ENCODE measurements at regions of chr5 and their contacts with region 1.

Region 1: GRCh38 chr5:177370488-177371119 is 12.9 kb downstream of the RGS14 start:
- DNase-seq: peak; percentile 75
- H3K4me3 Mint-ChIP-seq: peak overlapping the region; percentile 74
- H3K27ac Mint-ChIP-seq: no peak overlapping the region
- H3K4me1 Mint-ChIP-seq: peaks cover 70% of the 10 kb centered on the region
- H3K27me3 Mint-ChIP-seq: no peaks in the 10 kb centered on the region

Region 2: GRCh38 chr5:177311723-177312648 is 58.6 kb before region 1 on chr5 and contains the start of gene MXD3:
- CTCF ChIA-PET with region 1: interaction called, 11 read pairs
- intact Hi-C with region 1: no loop called
- DNase-seq: peak; percentile 99
- H3K4me3 Mint-ChIP-seq: peak within 1 kb of the TSS; percentile 97
- H3K27ac Mint-ChIP-seq: peak within 1 kb of the TSS; percentile 82
- H3K4me1 Mint-ChIP-seq: peaks cover 20% of the 10 kb centered on the region
- H3K27me3 Mint-ChIP-seq: peaks cover 3% of the 10 kb centered on the region
- total RNA-seq, gene MXD3: 45.0 to 51.7 TPM

Region 3: DNA sequence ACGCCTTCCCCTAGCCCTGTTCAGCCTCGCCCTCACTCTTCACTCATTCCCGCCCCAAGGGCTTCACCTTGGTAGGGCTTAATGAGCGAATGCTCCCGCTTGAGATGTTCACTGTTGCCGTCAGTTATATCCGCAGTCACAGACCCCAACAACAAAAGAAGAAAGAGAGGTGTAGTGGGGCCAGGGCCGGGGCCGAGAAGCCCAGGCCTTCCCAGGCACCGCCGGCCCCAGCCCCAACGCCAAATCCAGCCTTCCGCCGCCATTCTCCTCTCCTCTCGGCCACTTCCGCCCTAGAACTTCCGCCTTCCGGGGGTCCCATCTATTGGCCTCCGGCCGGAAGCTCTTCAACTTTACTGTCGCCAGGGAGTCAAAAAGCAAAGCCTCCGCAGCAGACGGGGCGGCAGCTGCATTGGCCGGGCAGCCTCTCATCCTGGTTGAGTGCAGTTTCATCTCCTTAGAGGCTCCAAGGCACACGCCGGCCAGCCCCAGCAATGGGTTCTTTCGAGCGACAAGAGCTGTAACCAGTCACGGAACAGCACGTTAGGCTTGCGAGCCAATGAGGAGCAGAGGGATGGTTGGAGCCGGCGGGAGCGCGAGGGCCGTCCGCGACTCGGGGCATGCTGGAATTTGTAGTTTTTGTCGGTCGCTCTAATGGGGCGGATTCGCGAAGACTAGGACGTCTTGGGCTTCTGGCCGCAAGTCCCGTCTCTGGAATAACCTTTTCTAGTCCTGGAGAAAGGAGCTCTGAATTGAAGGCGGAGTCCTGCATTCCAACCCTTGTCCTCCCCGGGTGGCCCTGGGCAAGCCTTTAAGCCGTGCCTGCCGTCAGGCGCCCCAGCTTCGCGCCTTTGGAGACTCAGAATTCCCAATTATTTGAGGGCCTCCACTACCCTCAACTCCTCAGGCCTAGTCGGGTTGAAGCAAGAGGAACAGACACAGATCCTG is 18.9 kb before region 1 on chr5 and contains the start of gene LMAN2:
- CTCF ChIA-PET with region 1: interaction called, 50 read pairs
- intact Hi-C with region 1: loop called (anchors 1 kb)
- DNase-seq: peak; percentile 96
- H3K4me3 Mint-ChIP-seq: peak within 1 kb of the TSS; percentile 95
- H3K27ac Mint-ChIP-seq: peak within 1 kb of the TSS; percentile 100
- H3K4me1 Mint-ChIP-seq: peaks cover 43% of the 10 kb centered on the region
- H3K27me3 Mint-ChIP-seq: no peaks in the 10 kb centered on the region
- total RNA-seq, gene LMAN2: 82.2 to 83.9 TPM

Region 4: GRCh38 chr5:177357459-177358351 is 12.9 kb before region 1 on chr5 and contains the start of gene RGS14:
- CTCF ChIA-PET with region 1: interaction called, 50 read pairs
- intact Hi-C with region 1: no loop called
- DNase-seq: peak; percentile 73
- H3K4me3 Mint-ChIP-seq: peak within 1 kb of the TSS; percentile 88
- H3K27ac Mint-ChIP-seq: peak within 1 kb of the TSS; percentile 87
- H3K4me1 Mint-ChIP-seq: peaks cover 62% of the 10 kb centered on the region
- H3K27me3 Mint-ChIP-seq: no peaks in the 10 kb centered on the region
- total RNA-seq, gene RGS14: 34.6 to 39.2 TPM

Region 5: GRCh38 chr5:177382423-177383029 is 11.9 kb after region 1 on chr5:
- CTCF ChIA-PET with region 1: interaction called, 31 read pairs
- intact Hi-C with region 1: loop called (anchors 1 kb)
- DNase-seq: peak; percentile 71
- H3K4me3 Mint-ChIP-seq: no peak overlapping the region
- H3K27ac Mint-ChIP-seq: no peak overlapping the region
- H3K4me1 Mint-ChIP-seq: peaks cover 35% of the 10 kb centered on the region
- H3K27me3 Mint-ChIP-seq: no peaks in the 10 kb centered on the region